ENCODE measurements at regions of chr10 and their contacts with region 1.

Region 1: DNA sequence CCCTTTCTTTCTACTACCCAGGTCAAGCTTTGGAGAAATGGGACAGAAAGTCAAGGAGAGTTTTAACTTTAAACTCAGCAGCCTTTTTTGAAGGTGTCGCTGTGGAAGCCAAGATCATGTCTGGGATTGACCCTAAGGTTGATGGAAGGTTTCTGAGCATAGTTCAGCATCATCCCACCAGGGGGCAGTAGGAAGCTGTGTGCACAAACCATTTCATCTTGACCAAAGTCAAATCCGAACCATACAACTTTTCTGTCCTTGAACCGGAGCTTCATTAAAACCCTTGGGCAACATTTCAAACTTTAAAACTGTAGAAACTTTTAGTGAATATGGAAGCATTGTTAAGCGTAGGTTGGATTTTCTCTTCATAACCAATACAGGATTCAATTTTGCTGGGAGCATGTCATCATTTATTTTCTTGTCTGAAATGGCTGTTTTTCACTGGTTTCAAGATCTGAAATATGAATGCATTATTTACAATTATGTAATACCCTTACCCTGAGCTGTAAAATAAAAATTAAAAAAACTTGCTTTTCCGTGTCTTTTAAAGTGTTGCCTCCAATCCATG is 214.4 kb upstream of the KIAA1217 start:
- DNase-seq: peak; percentile 69
- ATAC-seq: peak; percentile 57; the same call in 1 of the 2 replicates
- H3K4me3 ChIP-seq: no peak overlapping the region
- H3K27ac ChIP-seq: no peak overlapping the region
- H3K4me1 ChIP-seq: no peaks in the 10 kb centered on the region
- H3K27me3 ChIP-seq: peaks cover 20% of the 10 kb centered on the region
- CTCF ChIP-seq: peak; percentile 86

Region 2: GRCh38 chr10:24201503-24202180 is 207.1 kb after region 1 on chr10:
- CTCF ChIA-PET with region 1: no interaction called
- POLR2A ChIA-PET with region 1: no interaction called
- intact Hi-C with region 1: loop called (anchors 1 kb)
- DNase-seq: no peak
- ATAC-seq: no peak
- H3K4me3 ChIP-seq: no peak overlapping the region
- H3K27ac ChIP-seq: no peak overlapping the region
- H3K4me1 ChIP-seq: peaks cover 6% of the 10 kb centered on the region
- H3K27me3 ChIP-seq: no peaks in the 10 kb centered on the region
- CTCF ChIP-seq: no peak

Region 3: DNA sequence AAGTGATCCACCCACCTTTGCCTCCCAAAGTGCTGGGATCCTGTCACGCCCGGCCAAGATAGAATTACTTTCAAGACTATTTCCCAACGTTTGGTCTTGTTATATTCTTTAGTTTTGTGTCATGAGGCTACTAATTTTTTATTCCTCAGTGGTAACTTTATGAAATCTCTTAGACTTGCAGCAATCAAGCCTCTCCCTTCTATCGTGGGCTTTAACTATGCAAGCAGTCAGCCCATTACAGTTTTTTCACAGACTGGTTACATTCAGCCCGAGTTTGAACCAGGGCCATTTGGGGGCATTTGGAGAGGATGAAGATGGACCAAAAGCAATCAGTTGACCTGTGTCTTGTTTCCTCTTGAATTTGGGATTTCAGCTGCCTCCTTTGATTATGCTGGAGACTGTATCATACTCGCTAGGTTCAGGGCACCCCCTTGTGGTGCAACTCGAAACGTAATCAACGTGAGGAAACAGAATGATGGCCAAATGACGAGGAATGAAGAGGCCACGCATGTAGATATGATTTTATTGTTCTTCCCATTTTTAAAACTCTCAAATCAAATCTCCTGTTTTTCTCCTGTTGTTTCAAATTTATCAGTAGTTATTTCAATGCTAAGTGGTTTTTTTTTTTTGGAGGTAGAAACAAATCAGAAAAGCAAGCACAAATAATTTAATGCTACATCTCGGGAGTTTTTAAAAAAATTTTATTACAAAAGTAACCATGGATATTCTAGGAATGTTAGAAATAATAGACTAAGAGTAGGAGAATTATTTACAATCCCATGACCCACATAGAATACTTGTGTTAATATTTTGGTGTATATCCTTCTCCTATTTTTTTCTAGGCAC is 365.9 kb after region 1 on chr10:
- CTCF ChIA-PET with region 1: no interaction called
- POLR2A ChIA-PET with region 1: no interaction called
- intact Hi-C with region 1: loop called (anchors 1 kb)
- DNase-seq: peak; percentile 77
- ATAC-seq: peak; percentile 77
- H3K4me3 ChIP-seq: no peak overlapping the region
- H3K27ac ChIP-seq: no peak overlapping the region
- H3K4me1 ChIP-seq: no peaks in the 10 kb centered on the region
- H3K27me3 ChIP-seq: no peaks in the 10 kb centered on the region
- CTCF ChIP-seq: peak; percentile 83

Region 4: DNA sequence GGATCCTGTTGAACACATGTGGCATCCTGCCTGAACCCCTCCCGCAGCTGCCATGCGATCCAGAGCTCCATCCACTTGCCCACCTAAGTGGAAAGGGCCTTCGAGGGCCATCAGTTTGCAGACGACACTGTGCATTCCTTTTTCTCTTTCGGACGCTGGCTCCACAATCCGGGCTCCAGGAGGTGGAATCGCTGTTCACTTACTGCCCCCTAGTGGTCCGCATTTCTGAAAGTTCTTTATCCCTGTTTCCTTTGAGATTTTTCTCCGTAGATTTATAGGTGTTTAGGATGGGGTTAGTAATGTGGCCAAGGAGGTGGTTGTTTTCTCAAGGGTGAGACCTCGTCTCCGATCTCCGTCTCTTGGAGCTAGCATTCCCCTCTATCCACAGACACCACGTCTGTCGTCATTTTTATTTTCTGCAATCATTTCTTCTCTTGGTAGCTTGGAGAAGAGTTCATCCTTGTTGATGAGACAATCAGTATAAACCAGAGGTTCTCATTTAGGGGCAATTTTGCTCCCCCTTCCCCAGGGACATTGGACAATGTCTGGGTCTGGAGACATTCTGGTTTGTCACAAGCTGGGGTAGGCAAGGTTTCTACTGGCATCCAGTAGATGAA is 524.5 kb after region 1 on chr10:
- CTCF ChIA-PET with region 1: no interaction called
- POLR2A ChIA-PET with region 1: no interaction called
- intact Hi-C with region 1: loop called (anchors 2 kb)
- DNase-seq: peak; percentile 68
- ATAC-seq: peak; percentile 58; the same call in 1 of the 2 replicates
- H3K4me3 ChIP-seq: no peak overlapping the region
- H3K27ac ChIP-seq: no peak overlapping the region
- H3K4me1 ChIP-seq: no peaks in the 10 kb centered on the region
- H3K27me3 ChIP-seq: no peaks in the 10 kb centered on the region
- CTCF ChIP-seq: peak; percentile 78

Region 5: DNA sequence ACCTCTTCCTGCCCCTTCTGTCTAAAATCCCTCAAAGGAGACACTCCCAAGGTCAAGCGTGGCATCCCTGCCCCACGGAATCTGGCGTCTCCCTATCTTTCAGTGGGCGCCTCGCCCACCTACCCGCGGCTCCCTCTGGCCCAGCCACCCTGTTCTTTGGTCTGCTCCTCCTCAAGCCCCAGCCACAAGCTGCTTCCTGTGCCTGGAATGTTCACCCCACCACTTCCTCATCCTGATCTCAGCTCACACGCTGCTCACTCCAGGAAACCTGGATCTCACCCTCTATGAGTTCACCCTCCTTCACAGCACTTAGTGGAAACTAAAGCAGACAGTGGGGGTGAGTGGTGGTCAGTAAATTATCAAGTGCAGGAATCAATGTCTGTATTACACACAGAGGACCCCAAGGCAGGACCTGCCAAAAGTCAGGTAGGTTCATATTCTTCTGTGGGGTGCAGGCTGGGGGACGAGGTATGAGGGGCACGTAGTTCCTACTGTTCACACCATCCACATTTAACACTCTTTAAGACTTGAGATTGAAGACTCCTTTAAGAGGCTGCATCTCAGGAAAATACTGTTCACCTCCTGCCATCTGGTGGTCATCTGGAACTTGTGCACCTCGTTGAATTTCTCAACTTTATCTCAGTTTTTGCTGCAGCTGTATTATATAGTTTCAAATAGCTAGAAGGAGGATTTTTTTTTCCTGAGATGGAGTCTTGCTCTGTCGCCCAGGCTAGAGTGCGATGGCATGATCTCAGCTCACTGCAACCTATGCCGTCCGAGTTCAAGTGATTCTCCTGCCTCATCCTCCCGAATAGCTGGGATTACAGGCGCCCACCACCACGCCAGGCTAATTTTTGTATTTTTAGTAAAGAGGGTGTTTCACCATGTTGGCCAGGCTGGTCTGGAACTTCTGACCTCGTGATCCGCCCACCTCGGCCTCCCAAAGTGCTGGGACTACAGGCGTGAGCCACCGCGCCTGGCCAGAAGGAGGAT is 562.5 kb after region 1 on chr10:
- CTCF ChIA-PET with region 1: no interaction called
- POLR2A ChIA-PET with region 1: no interaction called
- intact Hi-C with region 1: loop called (anchors 1 kb)
- DNase-seq: peak; percentile 74
- ATAC-seq: peak; percentile 48
- H3K4me3 ChIP-seq: no peak overlapping the region
- H3K27ac ChIP-seq: no peak overlapping the region
- H3K4me1 ChIP-seq: peaks cover 10% of the 10 kb centered on the region; the same call in 1 of the 2 replicates
- H3K27me3 ChIP-seq: no peaks in the 10 kb centered on the region
- CTCF ChIP-seq: peak; percentile 63